ENCODE measurements at regions of chr12 and their contacts with region 1.

Region 1: DNA sequence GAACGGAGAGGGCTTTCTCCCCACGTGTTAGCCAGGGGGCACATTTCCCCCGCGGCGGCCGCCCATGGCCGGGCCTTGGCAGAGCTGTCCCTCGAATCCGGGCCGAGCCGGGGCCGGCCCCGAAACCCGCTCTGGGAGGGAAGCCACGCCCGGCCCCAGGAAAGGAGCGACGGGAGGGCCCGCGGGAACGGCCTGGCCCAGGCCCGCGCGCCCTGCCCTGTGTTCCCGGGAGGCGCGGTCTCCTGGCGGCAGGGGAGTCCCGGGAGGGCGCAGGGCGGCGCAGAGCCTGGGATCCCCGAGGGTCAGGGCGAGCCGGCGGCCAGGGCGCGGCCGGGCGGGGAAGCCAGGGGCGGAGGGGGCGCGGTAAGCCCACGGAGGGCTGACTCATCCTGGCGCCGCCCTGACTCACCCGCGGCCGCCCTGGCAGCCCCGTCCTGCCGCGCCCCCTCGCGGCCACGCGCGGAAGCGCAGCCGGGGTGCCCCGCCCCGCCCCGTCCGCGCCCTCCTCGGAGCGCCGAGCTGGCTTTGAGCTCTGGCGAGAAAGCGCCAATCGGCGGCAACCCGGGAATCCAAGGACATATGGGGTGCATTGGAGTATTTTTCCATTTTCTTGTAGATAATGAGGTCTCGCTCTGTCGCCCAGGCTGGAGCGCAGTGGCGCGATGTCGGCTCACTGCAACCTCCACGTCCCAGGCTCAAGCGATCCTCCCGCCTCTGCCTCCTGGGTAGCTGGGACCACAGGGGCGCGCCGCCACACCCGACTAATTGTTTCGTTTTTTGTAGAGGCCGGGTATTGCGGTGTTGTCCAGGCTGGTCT is 31.8 kb upstream of the PLEKHG6 start:
- DNase-seq: peak; percentile 84
- H3K4me3 ChIP-seq: peak overlapping the region; percentile 45 to 59
- H3K27ac ChIP-seq: peak overlapping the region; percentile 94 to 99
- H3K4me1 ChIP-seq: peaks cover 26% of the 10 kb centered on the region
- H3K27me3 ChIP-seq: no peaks in the 10 kb centered on the region
- CTCF ChIP-seq: peak; percentile 98 to 100 (median 99)
- POLR2A ChIP-seq: peak; percentile 47

Region 2: DNA sequence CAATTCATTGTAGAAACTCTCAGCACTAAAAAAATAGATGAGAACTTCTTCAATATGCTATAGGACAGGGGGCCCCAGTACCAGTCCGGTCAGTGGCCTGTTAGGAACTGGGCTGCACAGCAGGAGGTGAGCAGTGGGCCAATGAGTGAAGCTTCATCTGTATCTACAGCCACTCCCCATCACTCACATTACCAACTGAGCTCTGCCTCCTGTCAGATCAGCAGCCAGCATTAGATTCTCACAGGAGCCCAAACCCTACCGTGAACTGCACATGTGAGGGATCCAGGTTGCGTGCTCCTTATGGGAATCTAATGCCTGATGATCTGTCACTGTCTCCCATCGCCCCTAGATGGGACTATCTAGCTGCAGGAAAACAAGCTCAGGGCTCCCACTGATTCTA is 317.9 kb before region 1 on chr12:
- intact Hi-C with region 1: no loop called
- DNase-seq: no peak
- H3K4me3 ChIP-seq: no peak overlapping the region
- H3K27ac ChIP-seq: no peak overlapping the region
- H3K4me1 ChIP-seq: no peaks in the 10 kb centered on the region
- H3K27me3 ChIP-seq: no peaks in the 10 kb centered on the region
- CTCF ChIP-seq: no peak
- POLR2A ChIP-seq: no peak

Region 3: DNA sequence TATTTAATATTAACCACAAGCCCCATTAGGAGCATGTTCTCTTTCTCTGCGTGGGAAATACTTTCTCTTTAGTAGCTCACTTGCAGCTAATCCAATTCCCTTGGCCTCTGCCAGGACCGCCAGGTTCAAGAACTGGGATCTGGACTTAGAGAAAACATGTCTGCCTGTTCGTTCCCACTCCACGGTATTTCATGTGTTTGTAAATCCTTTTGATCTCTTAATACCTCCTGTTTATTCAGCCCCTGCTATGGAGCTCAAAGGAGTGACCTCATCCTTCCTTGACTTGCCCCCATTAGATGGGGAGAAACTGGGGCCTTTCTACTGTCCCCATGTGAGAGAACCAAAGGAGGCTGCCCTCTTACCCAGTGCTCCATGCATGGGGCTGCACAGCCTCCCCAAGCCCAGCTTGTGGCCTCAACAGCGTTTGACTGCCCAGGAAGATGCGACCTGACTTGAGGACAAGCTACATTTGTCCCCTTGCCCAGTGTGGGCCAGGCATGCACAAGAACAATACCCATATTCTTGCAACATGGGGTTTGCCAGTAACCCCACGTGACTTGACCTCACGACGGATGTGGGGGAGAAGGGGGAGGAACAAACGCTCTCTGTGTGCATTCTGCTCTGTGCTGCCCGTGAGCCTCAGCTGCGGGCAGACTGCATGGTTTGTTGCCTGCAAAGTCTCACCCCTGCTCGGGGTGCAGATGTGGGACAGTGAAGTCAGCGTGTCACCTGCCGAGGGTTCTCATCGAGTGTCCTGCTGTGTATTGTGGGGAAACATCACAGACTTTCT is 48.1 kb before region 1 on chr12:
- intact Hi-C with region 1: loop called (anchors 5 kb)
- DNase-seq: peak; percentile 81
- H3K4me3 ChIP-seq: no peak overlapping the region
- H3K27ac ChIP-seq: peak overlapping the region; percentile 94 to 98
- H3K4me1 ChIP-seq: peaks cover 91% of the 10 kb centered on the region
- H3K27me3 ChIP-seq: no peaks in the 10 kb centered on the region
- CTCF ChIP-seq: no peak
- POLR2A ChIP-seq: no peak

Measured in prostate gland (tissue), 2 donors.